ENCODE measurements at regions of chr19 and their contacts with region 1.

Region 1: GRCh38 chr19:30649934-30650614 is 277.9 kb downstream of the ZNF536 start:
- DNase-seq: peak; percentile 57
- ATAC-seq: peak; percentile 83
- H3K4me3 ChIP-seq: no peak overlapping the region
- H3K27ac ChIP-seq: no peak overlapping the region
- H3K4me1 ChIP-seq: no peaks in the 10 kb centered on the region
- H3K27me3 ChIP-seq: peaks cover 0 to 28% of the 10 kb centered on the region in 2 experiments; a peak in 3 of 5 replicates
- CTCF ChIP-seq: peak; percentile 80
- EP300 ChIP-seq: no peak
- POLR2A ChIP-seq: no peak
- RAD21 ChIP-seq: 0 out of 2 replicates have a peak, but pooled peaks have one; percentile 28

Region 2: GRCh38 chr19:29745253-29745652 is 904.8 kb before region 1 on chr19:
- CTCF ChIA-PET with region 1: no interaction called
- POLR2A ChIA-PET with region 1: no interaction called
- in situ Hi-C with region 1: loop called (anchors 25 kb)
- intact Hi-C with region 1: no loop called
- DNase-seq: peak; percentile 16
- ATAC-seq: peak; percentile 97
- H3K4me3 ChIP-seq: no peak overlapping the region
- H3K27ac ChIP-seq: no peak overlapping the region
- H3K4me1 ChIP-seq: no peaks in the 10 kb centered on the region
- H3K27me3 ChIP-seq: peaks cover 0 to 9% of the 10 kb centered on the region in 2 experiments; a peak in 2 of 5 replicates
- CTCF ChIP-seq: peak; percentile 37; the same call in 1 of the 2 replicates
- EP300 ChIP-seq: no peak
- POLR2A ChIP-seq: no peak
- RAD21 ChIP-seq: no peak

Region 3: DNA sequence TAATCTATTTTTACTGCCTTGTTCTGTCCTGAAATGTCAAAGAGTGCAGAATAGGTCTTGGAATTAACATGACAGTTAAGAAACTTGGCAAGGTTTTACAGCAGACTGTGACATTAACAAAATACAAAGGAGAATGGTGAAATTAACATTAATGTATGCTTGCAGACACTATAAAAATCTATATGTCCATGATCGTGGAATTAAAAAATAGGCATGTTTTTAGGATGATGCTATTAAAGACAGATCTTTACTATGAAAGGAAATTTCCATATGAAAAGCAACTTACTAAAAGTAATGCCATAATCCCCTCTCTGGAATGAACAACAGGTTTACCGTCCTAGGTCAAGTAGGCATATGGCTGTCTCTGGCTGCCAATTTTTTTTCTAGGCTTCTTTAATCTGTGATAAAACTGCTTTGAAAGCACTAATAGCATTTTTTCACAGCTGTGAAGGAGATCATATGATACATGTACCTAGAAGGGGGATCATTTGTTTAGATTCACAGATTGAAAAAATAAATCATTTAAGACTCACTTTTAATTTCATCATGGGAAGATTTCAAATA is 13.6 kb after region 1 on chr19:
- CTCF ChIA-PET with region 1: no interaction called
- POLR2A ChIA-PET with region 1: no interaction called
- in situ Hi-C with region 1: no loop called
- intact Hi-C with region 1: loop called (anchors 1 kb)
- DNase-seq: no peak
- ATAC-seq: no peak
- H3K4me3 ChIP-seq: no peak overlapping the region
- H3K27ac ChIP-seq: peak overlapping the region; percentile 74
- H3K4me1 ChIP-seq: peaks cover 39% of the 10 kb centered on the region
- H3K27me3 ChIP-seq: no peaks in the 10 kb centered on the region
- CTCF ChIP-seq: no peak
- EP300 ChIP-seq: no peak
- POLR2A ChIP-seq: no peak
- RAD21 ChIP-seq: no peak

Region 4: DNA sequence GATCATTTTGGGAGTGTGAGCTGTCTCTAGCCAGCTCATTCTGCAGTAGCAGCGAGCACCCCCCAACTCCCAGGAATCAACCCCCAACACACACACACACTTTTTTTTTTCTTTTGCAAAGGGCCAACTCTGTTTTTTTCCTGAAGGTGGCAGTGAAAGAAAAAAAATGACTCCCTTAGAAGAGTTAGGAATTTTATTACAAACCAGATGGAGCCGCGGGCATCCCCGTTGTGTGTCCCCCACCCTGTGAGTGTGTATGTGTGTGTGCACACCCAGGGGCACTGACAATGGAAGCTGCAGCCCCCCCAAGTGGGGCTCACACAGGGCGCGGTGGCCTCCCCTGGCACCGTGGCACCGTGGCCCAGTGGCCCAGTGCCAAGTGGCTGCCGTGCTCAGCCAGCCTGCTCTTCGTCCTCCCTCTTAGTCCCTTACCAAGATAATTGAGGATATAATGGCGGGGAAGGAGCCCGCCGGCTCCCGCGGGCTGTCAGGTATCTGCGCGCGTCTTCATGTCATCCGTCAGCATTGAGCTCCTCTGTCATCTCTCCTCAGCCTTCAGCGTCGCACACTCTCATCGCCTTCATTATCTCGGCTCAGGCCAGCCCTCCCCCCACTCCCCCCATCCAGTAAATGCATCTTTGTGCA is 36.2 kb after region 1 on chr19:
- CTCF ChIA-PET with region 1: no interaction called
- POLR2A ChIA-PET with region 1: no interaction called
- in situ Hi-C with region 1: no loop called
- intact Hi-C with region 1: no loop called
- DNase-seq: no peak
- ATAC-seq: no peak
- H3K4me3 ChIP-seq: no peak overlapping the region
- H3K27ac ChIP-seq: no peak overlapping the region
- H3K4me1 ChIP-seq: no peaks in the 10 kb centered on the region
- H3K27me3 ChIP-seq: peaks cover 0 to 19% of the 10 kb centered on the region in 2 experiments; a peak in 3 of 5 replicates
- CTCF ChIP-seq: no peak
- EP300 ChIP-seq: no peak
- POLR2A ChIP-seq: no peak
- RAD21 ChIP-seq: no peak

Region 5: DNA sequence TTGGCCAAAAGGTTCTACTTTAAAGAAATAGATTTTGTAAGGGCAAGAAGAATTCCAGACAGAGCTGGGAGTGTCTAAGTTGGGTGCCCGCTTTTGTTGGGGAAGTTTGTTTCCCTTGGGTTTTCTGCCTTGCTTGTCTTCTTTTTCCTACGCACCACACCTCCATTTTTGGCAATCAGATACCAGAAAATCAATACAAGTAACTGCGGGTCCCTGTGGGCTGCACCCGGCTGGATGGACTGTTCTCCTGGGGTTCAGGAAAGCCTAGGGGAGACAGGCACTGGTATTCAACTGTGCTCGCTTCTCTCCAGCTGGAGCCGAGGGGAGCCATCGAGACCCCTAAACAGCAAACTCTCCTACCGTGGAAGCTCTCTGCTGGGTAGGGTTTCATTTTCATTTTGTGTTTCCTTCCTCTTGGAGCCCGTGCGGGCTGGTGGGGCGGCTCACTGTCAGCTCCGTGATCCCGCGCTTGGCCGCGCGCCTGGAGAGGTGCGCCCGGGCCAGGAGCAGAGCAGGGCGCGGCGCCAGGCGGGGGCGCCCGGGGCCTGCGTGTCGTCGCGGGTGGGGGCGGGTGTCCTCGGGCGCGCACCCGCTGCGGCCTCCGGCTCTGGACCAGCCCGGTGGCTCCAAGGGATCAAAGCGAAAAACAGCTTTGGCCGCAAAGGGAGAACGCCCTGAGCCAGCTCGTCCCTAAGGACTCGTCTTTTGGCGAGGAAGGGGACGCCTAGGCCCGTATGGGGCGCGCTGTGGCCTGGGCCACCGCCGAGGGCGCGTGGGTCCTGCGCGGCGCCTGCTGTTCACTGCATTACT is 69.3 kb after region 1 on chr19:
- CTCF ChIA-PET with region 1: no interaction called
- POLR2A ChIA-PET with region 1: no interaction called
- in situ Hi-C with region 1: no loop called
- intact Hi-C with region 1: no loop called
- DNase-seq: no peak
- ATAC-seq: peak; percentile 83
- H3K4me3 ChIP-seq: peak overlapping the region in 2 of 3 experiments; percentile 30 to 37; a peak in 3 of 6 replicates
- H3K27ac ChIP-seq: no peak overlapping the region
- H3K4me1 ChIP-seq: no peaks in the 10 kb centered on the region
- H3K27me3 ChIP-seq: peaks cover 0 to 5% of the 10 kb centered on the region in 2 experiments; a peak in 1 of 5 replicates
- CTCF ChIP-seq: peak; percentile 40; the same call in 1 of the 2 replicates
- EP300 ChIP-seq: no peak
- POLR2A ChIP-seq: no peak
- RAD21 ChIP-seq: no peak

Measured in HepG2 (cell line).